Ovary (tissue), 10 donors: ENCODE measurements at regions of chr17 and their contacts with region 1.

Region 1: GRCh38 chr17:82236142-82236981 is 7.5 kb downstream of the SLC16A3 start:
- DNase-seq: peak; percentile 68 to 85 (median 81)
- H3K4me3 ChIP-seq: no peak overlapping the region
- H3K27ac ChIP-seq: peak overlapping the region; percentile 1 to 60
- H3K4me1 ChIP-seq: peaks cover 54% of the 10 kb centered on the region
- H3K27me3 ChIP-seq: no peaks in the 10 kb centered on the region
- CTCF ChIP-seq: peak; percentile 85 to 91 (median 89)
- EP300 ChIP-seq: no peak
- POLR2A ChIP-seq: no peak

Region 2: DNA sequence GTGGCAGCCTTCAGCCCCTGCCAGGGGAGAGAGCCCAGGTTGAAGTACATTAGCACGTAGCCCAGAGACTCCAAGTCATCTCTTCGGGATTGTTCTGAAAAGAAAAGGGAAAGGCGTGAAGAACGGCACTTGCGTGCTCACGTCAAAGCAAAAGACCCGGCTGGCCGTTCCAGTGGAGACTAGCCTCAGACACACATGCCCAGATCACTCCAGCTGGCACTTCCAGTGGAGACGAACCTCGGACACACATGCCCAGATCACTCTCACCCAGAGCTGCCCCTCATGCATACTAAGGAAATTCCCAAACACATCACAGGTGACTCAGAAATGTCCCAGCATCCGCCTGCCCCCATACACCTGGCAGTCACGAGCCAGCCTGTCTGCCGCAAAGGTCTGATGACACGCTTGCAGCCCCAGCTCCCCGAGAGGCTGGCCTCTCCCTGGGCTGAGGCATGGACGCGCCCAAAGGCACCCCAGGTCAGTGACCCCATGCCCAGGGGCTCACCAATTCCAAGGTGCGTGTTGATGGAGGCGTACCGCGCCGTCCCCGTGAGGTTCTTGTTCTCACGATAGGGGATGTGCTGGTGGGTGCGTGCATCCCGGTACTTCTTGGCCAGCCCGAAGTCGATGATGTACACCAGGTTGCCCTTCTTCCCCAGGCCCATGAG is 16.3 kb after region 1 on chr17:
- intact Hi-C with region 1: loop called in 1 of 4 experiments (anchors 1 kb)
- DNase-seq: peak in 1 of 5 donors; percentile 17
- H3K4me3 ChIP-seq: no peak overlapping the region
- H3K27ac ChIP-seq: no peak overlapping the region
- H3K4me1 ChIP-seq: no peaks in the 10 kb centered on the region
- H3K27me3 ChIP-seq: no peaks in the 10 kb centered on the region
- CTCF ChIP-seq: no peak
- EP300 ChIP-seq: no peak
- POLR2A ChIP-seq: no peak